ENCODE measurements at regions of chr5 and their contacts with region 1.

Region 1: GRCh38 chr5:81838307-81838906 is 87.5 kb upstream of the SSBP2 start:
- DNase-seq: peak; percentile 72 to 78 (median 77)
- H3K4me3 ChIP-seq: no peak overlapping the region
- H3K27ac ChIP-seq: no peak overlapping the region
- H3K4me1 ChIP-seq: peaks cover 0 to 12% (median 9%) of the 10 kb centered on the region in 4 experiments
- H3K27me3 ChIP-seq: no peaks in the 10 kb centered on the region

Region 2: GRCh38 chr5:81751009-81751835 is 87.2 kb before region 1 on chr5 and contains the start of gene SSBP2:
- CTCF ChIA-PET with region 1: interaction called, 14 read pairs
- POLR2A ChIA-PET with region 1: interaction called, 4 read pairs
- DNase-seq: peak; percentile 100
- H3K4me3 ChIP-seq: peak within 1 kb of the TSS; percentile 69 to 94 (median 87)
- H3K27ac ChIP-seq: peak within 1 kb of the TSS; percentile 90 to 96
- H3K4me1 ChIP-seq: peaks cover 18 to 36% (median 28%) of the 10 kb centered on the region in 4 experiments
- H3K27me3 ChIP-seq: no peaks in the 10 kb centered on the region

Region 3: DNA sequence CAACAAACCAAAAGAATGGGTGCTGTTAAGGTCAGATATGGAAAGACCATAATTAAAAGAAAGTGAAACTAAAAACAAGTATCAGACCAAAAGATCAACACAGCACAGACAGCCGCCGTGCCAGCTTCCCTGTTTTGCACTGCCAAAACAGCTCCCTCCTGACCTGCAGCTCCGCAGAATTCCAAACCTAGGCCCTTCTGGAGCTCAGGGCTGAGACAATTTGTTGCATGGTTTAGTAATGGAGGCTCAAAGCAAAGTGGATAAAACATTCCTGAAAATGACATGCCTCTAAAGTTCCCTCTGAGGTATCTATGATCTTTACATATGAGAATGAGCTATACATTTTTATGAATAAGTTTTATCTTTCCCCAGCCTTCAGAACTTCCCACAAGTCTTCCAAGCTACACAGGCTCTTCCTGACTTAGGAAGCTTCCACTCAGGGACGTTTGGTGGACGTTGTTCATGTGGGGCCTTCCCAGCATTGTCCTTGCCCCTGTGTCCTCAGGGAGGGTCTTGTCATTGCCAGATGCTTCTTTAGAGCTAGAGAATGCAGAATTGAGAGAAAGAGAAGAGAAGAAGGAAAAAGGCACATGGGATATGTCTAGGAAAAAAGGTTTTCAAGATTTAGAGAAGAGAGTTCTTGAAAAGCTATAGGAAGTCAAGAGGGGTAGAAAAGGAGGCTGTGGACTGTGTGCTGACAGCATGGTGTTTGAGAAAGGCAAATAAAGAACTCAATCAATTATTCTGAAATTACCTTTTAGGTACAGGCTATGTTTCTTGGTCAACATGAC is 59.1 kb before region 1 on chr5:
- CTCF ChIA-PET with region 1: interaction called, 10 read pairs
- POLR2A ChIA-PET with region 1: no interaction called
- DNase-seq: peak; percentile 61 to 81 (median 73)
- H3K4me3 ChIP-seq: peak overlapping the region; percentile 29 to 73 (median 52)
- H3K27ac ChIP-seq: peak overlapping the region; percentile 84 to 89
- H3K4me1 ChIP-seq: peaks cover 10 to 20% (median 16%) of the 10 kb centered on the region in 4 experiments
- H3K27me3 ChIP-seq: no peaks in the 10 kb centered on the region

Region 4: GRCh38 chr5:81787474-81788242 is 50.7 kb before region 1 on chr5:
- CTCF ChIA-PET with region 1: interaction called, 17 read pairs
- POLR2A ChIA-PET with region 1: no interaction called
- DNase-seq: peak in 2 of 3 donors; percentile 75 to 76
- H3K4me3 ChIP-seq: peak overlapping the region in 1 of 7 experiments; percentile 43
- H3K27ac ChIP-seq: no peak overlapping the region
- H3K4me1 ChIP-seq: peaks cover 6 to 31% (median 27%) of the 10 kb centered on the region in 4 experiments
- H3K27me3 ChIP-seq: no peaks in the 10 kb centered on the region

Region 5: GRCh38 chr5:81851481-81852178 is 13.2 kb after region 1 on chr5:
- CTCF ChIA-PET with region 1: interaction called, 51 read pairs
- POLR2A ChIA-PET with region 1: no interaction called
- DNase-seq: peak; percentile 94 to 97 (median 96)
- H3K4me3 ChIP-seq: peak overlapping the region in 6 of 7 experiments; percentile 59 to 80 (median 64)
- H3K27ac ChIP-seq: peak overlapping the region; percentile 46 to 86
- H3K4me1 ChIP-seq: peaks cover 26 to 70% (median 53%) of the 10 kb centered on the region in 4 experiments
- H3K27me3 ChIP-seq: no peaks in the 10 kb centered on the region